ENCODE measurements at regions of chr9 and their contacts with region 1.

Region 1: DNA sequence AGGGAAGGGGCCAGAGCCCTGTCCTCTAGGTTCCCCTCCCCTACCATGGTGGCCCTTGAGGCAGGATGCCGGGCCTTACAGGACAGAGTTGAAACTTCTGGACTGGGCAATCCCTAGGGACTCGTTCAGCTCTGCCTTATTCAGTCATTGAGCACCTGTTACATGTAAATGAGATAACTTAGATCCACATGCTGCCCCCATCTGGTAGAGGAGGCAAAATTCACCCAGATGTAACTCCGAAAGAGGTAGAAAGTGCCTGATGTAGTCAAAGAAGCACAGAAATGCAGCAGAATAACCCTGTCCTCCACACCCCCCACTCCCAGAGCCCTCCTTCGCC is 1.5 kb downstream of the GGTA1 start:
- DNase-seq: peak; percentile 81 to 91 (median 91)
- H3K4me3 ChIP-seq: peak overlapping the region; percentile 45 to 87 (median 76)
- H3K27ac ChIP-seq: no peak overlapping the region
- H3K4me1 ChIP-seq: peaks cover 2 to 66% (median 47%) of the 10 kb centered on the region in 4 experiments
- H3K27me3 ChIP-seq: no peaks in the 10 kb centered on the region

Region 2: GRCh38 chr9:121445981-121446380 is 52.1 kb before region 1 on chr9:
- CTCF ChIA-PET with region 1: interaction called, 42 read pairs
- POLR2A ChIA-PET with region 1: no interaction called
- DNase-seq: peak; percentile 66 to 73 (median 71)
- H3K4me3 ChIP-seq: no peak overlapping the region
- H3K27ac ChIP-seq: no peak overlapping the region
- H3K4me1 ChIP-seq: peaks cover 6 to 17% (median 15%) of the 10 kb centered on the region in 4 experiments
- H3K27me3 ChIP-seq: peaks cover 0 to 19% (median 6%) of the 10 kb centered on the region in 5 experiments

Region 3: DNA sequence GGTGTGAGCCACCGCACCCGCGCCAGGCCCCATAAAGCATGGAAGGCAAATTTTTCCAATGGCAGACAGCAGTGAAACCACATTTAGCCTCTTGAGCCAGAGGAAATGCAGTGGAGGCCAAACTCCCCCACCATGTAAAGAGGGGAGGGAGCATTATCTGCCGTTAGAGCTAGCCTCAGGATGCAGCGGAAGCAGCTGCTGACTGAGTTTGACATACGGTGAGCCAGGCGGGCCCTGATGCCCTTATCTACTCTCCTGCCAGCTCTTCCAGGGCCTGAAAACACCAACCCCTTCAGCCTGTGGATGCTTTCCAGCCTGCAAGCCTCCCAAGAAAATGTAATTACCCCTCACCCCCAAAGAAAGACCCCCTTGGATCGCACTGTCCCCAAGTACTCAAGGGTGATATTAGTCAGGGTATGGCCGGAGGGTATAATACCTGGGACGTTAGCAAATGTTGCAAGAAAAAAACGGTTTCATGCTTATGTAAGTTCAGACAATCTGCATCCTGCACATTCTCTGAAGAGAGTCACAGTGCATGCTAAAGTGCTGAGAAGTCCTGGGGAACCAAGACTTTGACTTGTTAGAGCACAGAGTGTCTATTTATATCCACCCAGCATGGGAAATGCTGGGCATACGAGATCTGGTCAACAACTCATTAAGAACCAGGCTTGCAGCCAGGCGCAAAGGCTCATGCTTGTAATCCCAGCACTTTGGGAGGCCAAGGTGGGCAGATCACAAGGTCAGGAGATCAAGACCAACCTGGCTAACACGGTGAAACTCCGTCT is 12.8 kb after region 1 on chr9:
- CTCF ChIA-PET with region 1: interaction called, 19 read pairs
- POLR2A ChIA-PET with region 1: interaction called, 5 read pairs
- DNase-seq: peak; percentile 91 to 100 (median 98)
- H3K4me3 ChIP-seq: peak overlapping the region in 4 of 7 experiments; percentile 1 to 48 (median 15)
- H3K27ac ChIP-seq: peak overlapping the region; percentile 69 to 85
- H3K4me1 ChIP-seq: peaks cover 0 to 40% (median 36%) of the 10 kb centered on the region in 4 experiments
- H3K27me3 ChIP-seq: no peaks in the 10 kb centered on the region